Activated CD8-positive, alpha-beta memory T cell treated with anti-CD3 and anti-CD28 coated beads, Interleukin-2, amount 10 ng/mL, durations not matched to agents 7 days and 5 days (primary cell): ENCODE measurements at regions of chr19 and their contacts with region 1.

Region 1: DNA sequence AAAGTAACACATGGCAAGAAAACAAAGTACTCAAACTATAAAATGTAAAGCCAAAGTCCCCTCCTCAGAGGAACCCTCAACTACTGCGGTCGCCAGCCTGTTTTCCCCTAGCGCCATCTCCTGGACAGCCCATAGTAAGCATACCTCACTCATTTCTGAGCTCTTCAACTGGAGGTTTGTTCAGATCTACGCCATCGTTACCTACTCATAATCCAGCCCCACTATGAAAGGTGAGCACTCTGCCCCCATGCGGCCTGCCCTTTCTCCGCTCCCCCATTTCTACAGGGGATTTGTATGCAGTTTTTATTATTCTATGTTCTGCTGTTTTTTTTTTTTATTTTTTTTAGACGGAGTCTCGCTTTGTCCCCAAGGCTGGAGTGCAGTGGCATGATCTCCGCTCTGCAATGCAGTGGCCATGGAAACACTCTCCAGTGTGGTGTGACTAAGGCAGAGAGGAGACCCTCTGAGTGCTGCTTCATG is 26.2 kb downstream of the OPA3 start:
- DNase-seq: peak; percentile 81
- ATAC-seq: peak; percentile 97
- H3K4me3 Mint-ChIP-seq: no peak overlapping the region
- H3K27ac Mint-ChIP-seq: no peak overlapping the region
- H3K4me1 Mint-ChIP-seq: peaks cover 15% of the 10 kb centered on the region
- H3K27me3 Mint-ChIP-seq: no peaks in the 10 kb centered on the region

Region 2: DNA sequence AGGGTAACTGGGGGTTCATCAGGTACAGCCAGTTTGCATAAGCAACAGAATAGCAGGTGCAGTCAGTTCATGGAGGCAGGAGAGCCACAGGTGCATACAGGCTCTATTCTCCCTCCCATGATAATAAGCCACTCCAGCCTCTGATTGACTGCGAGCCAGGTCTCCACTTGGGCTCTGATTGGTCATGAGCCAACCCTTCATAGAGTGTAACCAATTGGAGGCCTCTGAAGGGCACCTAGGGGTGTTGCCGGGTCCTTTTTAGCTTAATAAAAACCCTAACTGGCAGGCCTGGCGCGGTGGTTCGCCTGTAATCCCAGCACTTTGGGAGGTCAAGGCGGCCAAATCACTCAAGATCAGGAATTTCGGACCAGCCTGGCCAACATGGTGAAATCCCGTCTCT is 227.0 kb before region 1 on chr19:
- CTCF ChIA-PET with region 1: no interaction called
- DNase-seq: no peak
- ATAC-seq: no peak
- H3K4me3 Mint-ChIP-seq: no peak overlapping the region
- H3K27ac Mint-ChIP-seq: no peak overlapping the region
- H3K4me1 Mint-ChIP-seq: peaks cover under 1% of the 10 kb centered on the region
- H3K27me3 Mint-ChIP-seq: peaks cover 10% of the 10 kb centered on the region

Region 3: DNA sequence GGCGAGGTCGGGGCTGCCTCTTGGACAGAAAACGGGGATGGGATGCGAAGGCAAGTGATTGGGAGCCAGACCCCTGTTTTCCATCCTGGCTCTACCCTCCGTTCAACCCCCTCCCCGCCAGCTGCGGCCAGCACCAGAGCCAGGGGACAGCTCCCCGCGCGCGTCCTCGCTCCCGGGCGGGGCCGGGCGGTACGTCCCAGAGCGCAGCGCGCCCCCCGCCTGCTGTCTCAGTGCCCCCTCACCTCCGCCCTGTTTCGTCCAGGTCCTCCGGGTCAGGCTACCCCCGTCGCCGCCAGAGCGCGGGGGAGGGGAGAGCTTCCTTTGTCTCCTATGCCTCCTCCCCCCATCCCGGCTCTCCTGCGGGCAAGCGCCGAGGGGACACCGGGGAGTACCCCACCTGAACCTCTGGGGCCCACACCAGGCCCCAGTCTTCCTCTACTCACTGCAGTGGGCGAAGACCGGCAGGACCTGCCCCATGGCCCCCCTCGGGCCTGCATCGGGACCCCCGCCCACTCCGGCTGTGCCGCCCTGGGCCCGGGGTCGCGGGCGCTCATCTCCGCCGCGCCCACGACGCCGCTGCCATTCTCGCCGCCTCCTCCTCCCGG is 62.0 kb before region 1 on chr19:
- CTCF ChIA-PET with region 1: interaction called, 17 read pairs
- DNase-seq: peak; percentile 72
- ATAC-seq: peak; percentile 25
- H3K4me3 Mint-ChIP-seq: peak overlapping the region; percentile 29
- H3K27ac Mint-ChIP-seq: no peak overlapping the region
- H3K4me1 Mint-ChIP-seq: peaks cover 40% of the 10 kb centered on the region
- H3K27me3 Mint-ChIP-seq: peaks cover 25% of the 10 kb centered on the region

Region 4: DNA sequence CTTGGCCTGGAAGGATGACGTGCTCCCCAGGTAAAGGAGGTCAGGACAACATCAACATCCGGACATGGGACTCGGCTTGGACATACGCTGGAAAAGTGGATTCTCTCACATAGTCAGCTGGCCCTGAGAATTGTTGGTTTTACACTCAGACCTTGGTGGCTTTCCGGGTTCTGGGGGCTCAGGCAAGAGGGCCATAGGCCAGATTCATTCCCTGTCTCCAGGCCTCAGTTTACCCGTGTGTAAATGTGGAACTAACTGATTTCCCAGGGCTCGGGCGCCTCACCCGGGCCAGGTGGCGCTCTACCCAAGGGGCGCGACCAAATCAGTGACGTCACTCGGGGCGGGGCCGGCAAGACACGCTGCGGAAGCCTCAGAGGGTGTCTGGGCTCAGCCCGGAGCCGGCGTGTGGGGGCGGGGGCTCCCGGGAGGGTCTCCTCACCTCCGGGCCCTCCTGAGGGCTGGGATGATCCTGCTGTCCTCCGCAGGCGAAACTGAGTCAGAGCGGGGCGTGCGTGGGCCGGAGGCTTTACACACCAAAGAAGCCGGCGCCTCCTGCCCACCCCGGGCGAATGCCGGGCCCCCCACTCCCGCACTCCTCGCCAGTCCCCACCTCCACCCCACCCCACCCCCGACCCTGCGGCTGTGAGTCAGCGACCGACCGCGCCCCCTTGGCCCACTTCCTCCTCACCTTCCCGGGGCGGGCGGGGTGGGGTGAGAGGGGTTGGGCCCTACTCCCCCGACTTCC is 52.0 kb before region 1 on chr19:
- CTCF ChIA-PET with region 1: interaction called, 17 read pairs
- DNase-seq: peak; percentile 98
- ATAC-seq: peak; percentile 76
- H3K4me3 Mint-ChIP-seq: peak overlapping the region; percentile 99
- H3K27ac Mint-ChIP-seq: peak overlapping the region; percentile 98
- H3K4me1 Mint-ChIP-seq: peaks cover 40% of the 10 kb centered on the region
- H3K27me3 Mint-ChIP-seq: no peaks in the 10 kb centered on the region

Region 5: DNA sequence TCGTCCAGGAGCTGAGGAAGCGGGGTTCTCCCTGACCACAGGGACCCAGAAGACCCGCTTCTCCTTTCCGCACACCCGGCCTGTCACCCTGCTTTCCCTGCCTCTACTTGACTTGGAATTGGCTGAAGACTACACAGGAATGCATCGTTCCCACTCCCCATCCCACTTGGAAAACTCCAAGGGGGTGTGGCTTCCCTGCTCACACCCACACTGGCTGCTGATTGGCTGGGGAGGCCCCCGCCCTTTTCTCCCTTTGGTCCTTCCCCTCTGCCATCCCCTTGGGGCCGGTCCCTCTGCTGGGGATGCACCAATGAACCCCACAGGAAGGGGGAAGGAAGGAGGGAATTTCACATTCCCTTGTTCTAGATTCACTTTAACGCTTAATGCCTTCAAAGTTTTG is 32.3 kb before region 1 on chr19:
- CTCF ChIA-PET with region 1: interaction called, 14 read pairs
- DNase-seq: no peak
- ATAC-seq: no peak
- H3K4me3 Mint-ChIP-seq: no peak overlapping the region
- H3K27ac Mint-ChIP-seq: no peak overlapping the region
- H3K4me1 Mint-ChIP-seq: peaks cover 25% of the 10 kb centered on the region
- H3K27me3 Mint-ChIP-seq: no peaks in the 10 kb centered on the region

Region 6: GRCh38 chr19:45542234-45542668 is 16.2 kb before region 1 on chr19:
- CTCF ChIA-PET with region 1: interaction called, 10 read pairs
- DNase-seq: no peak
- ATAC-seq: no peak
- H3K4me3 Mint-ChIP-seq: no peak overlapping the region
- H3K27ac Mint-ChIP-seq: no peak overlapping the region
- H3K4me1 Mint-ChIP-seq: peaks cover 11% of the 10 kb centered on the region
- H3K27me3 Mint-ChIP-seq: no peaks in the 10 kb centered on the region

Region 7: GRCh38 chr19:45569619-45570421 is 11.4 kb after region 1 on chr19:
- CTCF ChIA-PET with region 1: interaction called, 13 read pairs
- DNase-seq: peak; percentile 75
- ATAC-seq: peak; percentile 65
- H3K4me3 Mint-ChIP-seq: no peak overlapping the region
- H3K27ac Mint-ChIP-seq: no peak overlapping the region
- H3K4me1 Mint-ChIP-seq: no peaks in the 10 kb centered on the region
- H3K27me3 Mint-ChIP-seq: no peaks in the 10 kb centered on the region

Region 8: GRCh38 chr19:45607071-45608029 is 48.9 kb after region 1 on chr19:
- CTCF ChIA-PET with region 1: no interaction called
- DNase-seq: peak; percentile 57
- ATAC-seq: peak; percentile 47
- H3K4me3 Mint-ChIP-seq: no peak overlapping the region
- H3K27ac Mint-ChIP-seq: peak overlapping the region; percentile 87
- H3K4me1 Mint-ChIP-seq: peaks cover 13% of the 10 kb centered on the region
- H3K27me3 Mint-ChIP-seq: peaks cover 12% of the 10 kb centered on the region